ENCODE measurements at regions of chr15 and their contacts with region 1.

Region 1: DNA sequence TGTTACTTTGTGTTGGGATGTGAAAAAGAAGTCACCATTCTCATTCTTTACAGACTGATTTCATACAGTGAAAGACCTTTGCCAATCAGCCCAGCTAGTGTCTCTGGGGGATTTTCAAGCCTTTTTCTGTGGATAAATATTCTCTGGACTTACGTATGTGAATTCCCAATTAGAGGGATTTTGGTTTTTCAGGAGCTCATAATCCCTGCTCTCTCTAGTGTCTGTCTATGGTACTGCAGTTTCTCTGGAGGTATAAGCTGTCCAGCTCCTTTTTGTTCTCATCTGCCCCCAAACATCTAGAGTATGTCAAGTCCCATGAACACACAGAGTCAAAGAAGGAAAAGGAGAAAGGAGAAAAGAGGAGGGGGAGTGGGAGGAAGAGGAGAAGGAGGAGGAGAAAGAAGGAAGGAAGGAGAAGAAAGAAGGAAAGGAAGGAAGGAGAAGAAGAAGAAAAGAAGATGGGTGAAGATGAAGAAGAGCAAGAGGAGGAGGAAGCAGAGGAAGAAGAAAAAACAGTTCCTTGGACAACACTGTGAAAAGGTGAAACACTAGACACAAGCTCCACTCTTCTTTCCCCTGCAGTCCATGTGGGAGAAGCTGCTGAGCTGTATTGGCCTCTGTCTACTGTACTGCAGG is 218.6 kb downstream of the GREM1 start:
- DNase-seq: peak; percentile 62
- H3K4me3 ChIP-seq: no peak overlapping the region
- H3K27ac ChIP-seq: no peak overlapping the region
- H3K4me1 ChIP-seq: no peaks in the 10 kb centered on the region
- H3K27me3 ChIP-seq: peaks cover 2 to 8% of the 10 kb centered on the region in 2 experiments
- CTCF ChIP-seq: peak; percentile 54 to 66
- POLR2A ChIP-seq: no peak

Region 2: DNA sequence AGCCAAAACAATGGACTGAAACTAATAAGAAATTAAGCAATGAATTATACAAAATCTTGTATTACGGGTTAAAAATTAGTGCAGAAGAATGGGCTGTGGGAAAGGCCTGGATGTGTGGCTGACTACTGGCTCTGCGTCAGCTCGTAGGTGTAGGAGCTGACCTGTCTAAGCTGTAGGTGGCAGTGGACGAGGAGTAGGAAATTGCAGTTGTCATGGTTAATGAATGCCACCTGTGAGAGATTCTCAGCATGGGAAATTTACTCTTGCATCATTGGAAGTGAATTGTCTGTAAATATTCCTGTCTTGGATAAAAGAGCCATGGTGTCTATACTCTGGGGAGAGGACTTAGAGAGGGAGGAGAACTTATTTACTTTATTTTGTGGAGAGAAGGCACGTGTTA is 882.7 kb before region 1 on chr15:
- CTCF ChIA-PET with region 1: no interaction called
- POLR2A ChIA-PET with region 1: no interaction called
- dilution Hi-C with region 1: no loop called
- intact Hi-C with region 1: no loop called
- DNase-seq: no peak
- H3K4me3 ChIP-seq: no peak overlapping the region
- H3K27ac ChIP-seq: no peak overlapping the region
- H3K4me1 ChIP-seq: no peaks in the 10 kb centered on the region
- H3K27me3 ChIP-seq: no peaks in the 10 kb centered on the region
- CTCF ChIP-seq: no peak
- POLR2A ChIP-seq: no peak

Region 3: GRCh38 chr15:32657198-32657883 is 279.1 kb before region 1 on chr15:
- CTCF ChIA-PET with region 1: interaction called, 204 read pairs
- POLR2A ChIA-PET with region 1: no interaction called
- dilution Hi-C with region 1: no loop called
- intact Hi-C with region 1: loop called (anchors 1 kb)
- DNase-seq: no peak
- H3K4me3 ChIP-seq: no peak overlapping the region
- H3K27ac ChIP-seq: no peak overlapping the region
- H3K4me1 ChIP-seq: peaks cover 7% of the 10 kb centered on the region
- H3K27me3 ChIP-seq: no peaks in the 10 kb centered on the region
- CTCF ChIP-seq: no peak
- POLR2A ChIP-seq: no peak

Region 4: DNA sequence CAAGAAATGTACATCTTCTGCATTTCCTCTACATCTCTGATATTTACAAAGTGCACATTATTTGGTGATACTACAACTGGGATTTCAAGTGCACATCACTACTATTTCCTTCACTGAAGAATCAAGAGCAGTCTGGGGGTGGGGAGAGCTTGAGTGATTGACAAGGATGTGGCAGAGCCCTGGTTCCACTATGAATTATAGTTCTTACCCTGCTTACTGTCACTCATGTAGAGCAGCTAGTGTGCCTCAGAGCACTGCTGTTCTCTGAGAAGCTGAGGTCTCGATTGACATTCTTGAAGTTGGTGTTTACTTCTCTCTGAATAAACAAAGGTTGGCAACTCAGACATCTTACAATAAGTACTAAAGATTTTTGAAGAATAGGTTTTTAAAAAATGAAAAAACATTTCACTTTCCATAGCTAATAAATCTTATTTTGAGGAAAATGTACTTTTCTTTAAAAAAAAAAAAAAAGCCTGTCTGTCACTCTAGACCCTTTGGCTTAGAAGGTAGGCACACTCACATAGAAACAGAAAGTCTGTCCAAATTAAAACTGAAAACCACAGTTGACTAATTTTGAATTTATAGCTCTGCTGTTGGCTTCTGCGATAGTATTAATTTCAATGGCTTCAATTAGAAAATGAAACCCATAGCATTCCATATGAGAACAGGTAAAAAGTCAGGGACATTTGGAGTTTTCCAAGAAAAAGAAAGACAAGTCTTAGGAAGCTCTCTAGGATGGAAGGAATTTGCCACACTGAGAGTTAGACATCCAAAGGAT is 213.0 kb before region 1 on chr15:
- CTCF ChIA-PET with region 1: interaction called, 11 read pairs
- POLR2A ChIA-PET with region 1: no interaction called
- dilution Hi-C with region 1: no loop called
- intact Hi-C with region 1: no loop called
- DNase-seq: no peak
- H3K4me3 ChIP-seq: no peak overlapping the region
- H3K27ac ChIP-seq: no peak overlapping the region
- H3K4me1 ChIP-seq: no peaks in the 10 kb centered on the region
- H3K27me3 ChIP-seq: peaks cover 30 to 47% of the 10 kb centered on the region in 2 experiments
- CTCF ChIP-seq: no peak
- POLR2A ChIP-seq: no peak

Region 5: GRCh38 chr15:32844118-32844711 is 92.2 kb before region 1 on chr15:
- CTCF ChIA-PET with region 1: interaction called, 293 read pairs
- POLR2A ChIA-PET with region 1: interaction called, 3 read pairs
- dilution Hi-C with region 1: no loop called
- intact Hi-C with region 1: loop called (anchors 1 kb)
- DNase-seq: peak; percentile 51
- H3K4me3 ChIP-seq: no peak overlapping the region
- H3K27ac ChIP-seq: no peak overlapping the region
- H3K4me1 ChIP-seq: no peaks in the 10 kb centered on the region
- H3K27me3 ChIP-seq: no peaks in the 10 kb centered on the region
- CTCF ChIP-seq: peak; percentile 45 to 61
- POLR2A ChIP-seq: no peak

Region 6: DNA sequence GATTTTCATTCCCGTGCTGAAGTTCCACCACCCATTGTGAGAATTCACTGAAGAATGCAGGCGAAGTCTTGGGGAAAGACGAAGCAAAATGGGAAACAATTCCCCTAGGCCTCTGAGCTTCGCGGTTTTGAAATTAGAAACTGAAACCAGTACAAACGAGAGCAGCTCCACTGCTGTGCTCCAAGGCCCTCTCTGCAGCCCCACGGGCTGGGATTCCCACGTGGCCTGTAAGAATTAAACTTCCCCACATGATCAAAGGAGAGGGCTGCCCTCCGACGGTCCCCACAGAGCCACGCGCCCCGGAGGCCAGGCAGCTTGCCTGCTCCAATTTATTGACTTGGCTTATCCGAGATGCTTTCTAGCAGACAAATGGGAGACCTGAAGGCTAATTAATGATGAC is 74.6 kb before region 1 on chr15:
- CTCF ChIA-PET with region 1: interaction called, 14 read pairs
- POLR2A ChIA-PET with region 1: no interaction called
- dilution Hi-C with region 1: no loop called
- intact Hi-C with region 1: no loop called
- DNase-seq: no peak
- H3K4me3 ChIP-seq: no peak overlapping the region
- H3K27ac ChIP-seq: no peak overlapping the region
- H3K4me1 ChIP-seq: peaks cover 7% of the 10 kb centered on the region
- H3K27me3 ChIP-seq: no peaks in the 10 kb centered on the region
- CTCF ChIP-seq: no peak
- POLR2A ChIP-seq: no peak

Region 7: GRCh38 chr15:32919749-32920414 is 16.5 kb before region 1 on chr15:
- CTCF ChIA-PET with region 1: interaction called, 20 read pairs
- POLR2A ChIA-PET with region 1: no interaction called
- dilution Hi-C with region 1: no loop called
- intact Hi-C with region 1: no loop called
- DNase-seq: no peak
- H3K4me3 ChIP-seq: no peak overlapping the region
- H3K27ac ChIP-seq: no peak overlapping the region
- H3K4me1 ChIP-seq: no peaks in the 10 kb centered on the region
- H3K27me3 ChIP-seq: peaks cover 2 to 12% of the 10 kb centered on the region in 2 experiments
- CTCF ChIP-seq: no peak
- POLR2A ChIP-seq: no peak

Region 8: GRCh38 chr15:33132722-33133345 is 196.4 kb after region 1 on chr15:
- CTCF ChIA-PET with region 1: interaction called, 11 read pairs
- POLR2A ChIA-PET with region 1: no interaction called
- dilution Hi-C with region 1: no loop called
- intact Hi-C with region 1: no loop called
- DNase-seq: peak; percentile 68
- H3K4me3 ChIP-seq: no peak overlapping the region
- H3K27ac ChIP-seq: no peak overlapping the region
- H3K4me1 ChIP-seq: peaks cover 10% of the 10 kb centered on the region
- H3K27me3 ChIP-seq: peaks cover 5% of the 10 kb centered on the region in 2 experiments
- CTCF ChIP-seq: peak; percentile 68 to 78
- POLR2A ChIP-seq: no peak

Measured in endothelial cell of umbilical vein (primary cell).